ENCODE measurements at regions of chr9 and their contacts with region 1.

Region 1: GRCh38 chr9:125407974-125408900 is 146.6 kb downstream of the GAPVD1 start:
- DNase-seq: peak; percentile 33 to 85 (median 69)
- ATAC-seq: peak; percentile 76
- H3K4me3 ChIP-seq: peak overlapping the region; percentile 41
- H3K4me3 Mint-ChIP-seq: peak overlapping the region; percentile 64 to 85 (median 72)
- H3K27ac ChIP-seq: no peak overlapping the region
- H3K27ac Mint-ChIP-seq: no peak overlapping the region
- H3K4me1 ChIP-seq: no peaks in the 10 kb centered on the region
- H3K4me1 Mint-ChIP-seq: peaks cover 0 to 15% (median 13%) of the 10 kb centered on the region in 7 donors
- H3K27me3 ChIP-seq: no peaks in the 10 kb centered on the region
- H3K27me3 Mint-ChIP-seq: peaks cover 15 to 38% (median 17%) of the 10 kb centered on the region in 5 donors

Region 2: DNA sequence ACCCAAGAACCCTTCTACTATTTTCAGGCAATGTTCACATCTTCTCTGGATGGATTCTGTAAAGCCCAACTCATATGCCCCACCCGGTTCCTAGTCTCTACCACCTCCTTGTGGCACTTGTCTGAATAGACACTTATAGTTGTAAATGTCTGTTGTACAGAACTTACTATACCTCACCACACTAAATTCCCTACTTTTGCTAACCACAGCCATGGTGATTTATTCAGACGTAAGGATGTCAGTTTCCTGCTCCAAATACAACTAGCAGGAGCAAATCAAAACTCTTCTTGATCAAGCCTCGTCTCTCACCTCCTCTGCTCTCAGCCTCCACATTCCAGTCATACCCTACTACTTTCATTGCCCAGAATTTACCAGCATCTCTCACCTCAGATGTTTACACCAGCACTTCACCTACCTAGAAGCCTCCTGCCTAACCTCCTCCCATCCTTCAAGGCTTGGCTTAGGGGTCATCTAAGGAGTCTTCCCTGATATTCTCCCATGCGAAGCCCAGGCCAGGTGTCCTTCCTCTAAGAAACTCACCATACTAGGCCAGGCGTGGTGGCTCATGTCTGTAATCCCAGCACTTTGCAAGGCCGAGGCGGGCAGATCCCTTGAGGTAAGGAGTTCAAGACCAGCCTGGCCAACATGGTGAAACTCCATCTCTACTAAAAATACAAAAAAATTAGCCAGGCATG is 223.3 kb after region 1 on chr9:
- CTCF ChIA-PET with region 1: interaction called, 4 read pairs
- POLR2A ChIA-PET with region 1: no interaction called
- intact Hi-C with region 1: loop called in 1 of 2 experiments (anchors 1 kb)
- DNase-seq: peak in 5 of 9 donors; percentile 17 to 37 (median 26)
- ATAC-seq: peak; percentile 59
- H3K4me3 ChIP-seq: no peak overlapping the region
- H3K4me3 Mint-ChIP-seq: peak overlapping the region in 2 of 10 donors; percentile 0 to 24
- H3K27ac ChIP-seq: no peak overlapping the region
- H3K27ac Mint-ChIP-seq: peak overlapping the region in 2 of 9 donors; percentile 28 to 72
- H3K4me1 ChIP-seq: peaks cover 11 to 14% of the 10 kb centered on the region in 2 donors
- H3K4me1 Mint-ChIP-seq: peaks cover 39 to 77% (median 66%) of the 10 kb centered on the region in 7 donors
- H3K27me3 ChIP-seq: no peaks in the 10 kb centered on the region
- H3K27me3 Mint-ChIP-seq: no peaks in the 10 kb centered on the region

Region 3: GRCh38 chr9:126228781-126229444 is 820.7 kb after region 1 on chr9:
- CTCF ChIA-PET with region 1: interaction called, 6 read pairs
- POLR2A ChIA-PET with region 1: no interaction called
- intact Hi-C with region 1: loop called (anchors 1 kb)
- DNase-seq: peak; percentile 14 to 69 (median 57)
- ATAC-seq: peak; percentile 90
- H3K4me3 ChIP-seq: no peak overlapping the region
- H3K4me3 Mint-ChIP-seq: peak overlapping the region in 1 of 10 donors; percentile 18
- H3K27ac ChIP-seq: no peak overlapping the region
- H3K27ac Mint-ChIP-seq: peak overlapping the region in 1 of 9 donors; percentile 22
- H3K4me1 ChIP-seq: no peaks in the 10 kb centered on the region
- H3K4me1 Mint-ChIP-seq: peaks cover 0 to 8% (median 0%) of the 10 kb centered on the region in 7 donors
- H3K27me3 ChIP-seq: no peaks in the 10 kb centered on the region
- H3K27me3 Mint-ChIP-seq: peaks cover 19 to 49% (median 42%) of the 10 kb centered on the region in 5 donors

Region 4: GRCh38 chr9:126301985-126302603 is 893.9 kb after region 1 on chr9:
- CTCF ChIA-PET with region 1: no interaction called
- POLR2A ChIA-PET with region 1: no interaction called
- intact Hi-C with region 1: loop called in 1 of 2 experiments (anchors 1 kb)
- DNase-seq: peak in 7 of 9 donors; percentile 33 to 68 (median 58)
- ATAC-seq: peak; percentile 79
- H3K4me3 ChIP-seq: no peak overlapping the region
- H3K4me3 Mint-ChIP-seq: no peak overlapping the region
- H3K27ac ChIP-seq: no peak overlapping the region
- H3K27ac Mint-ChIP-seq: peak overlapping the region in 1 of 9 donors; percentile 6
- H3K4me1 ChIP-seq: no peaks in the 10 kb centered on the region
- H3K4me1 Mint-ChIP-seq: peaks cover 3 to 8% (median 5%) of the 10 kb centered on the region in 7 donors
- H3K27me3 ChIP-seq: no peaks in the 10 kb centered on the region
- H3K27me3 Mint-ChIP-seq: peaks cover 0 to 4% (median 0%) of the 10 kb centered on the region in 5 donors